ENCODE measurements at regions of chr1 and their contacts with region 1.

Region 1: DNA sequence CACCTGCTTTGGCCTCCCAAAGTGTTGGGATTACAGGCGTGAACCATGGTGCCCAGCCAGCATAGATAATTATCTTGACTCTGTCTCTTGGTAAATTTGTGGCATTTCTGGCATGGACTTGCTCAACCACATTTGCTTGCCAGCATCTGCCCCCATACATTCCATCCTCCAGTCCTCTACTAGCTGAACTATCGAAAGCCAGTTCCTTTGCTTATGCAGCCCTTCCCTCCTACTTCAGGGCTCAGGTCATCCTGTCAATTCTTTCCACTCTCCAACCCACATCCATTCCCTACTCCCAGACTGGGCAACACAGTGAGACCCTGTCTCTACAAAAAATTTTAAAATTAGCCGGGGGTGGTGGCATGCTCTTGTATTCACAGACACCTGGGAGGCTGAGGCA is 13.0 kb upstream of the UQCRHL start:
- DNase-seq: no peak
- H3K4me3 ChIP-seq: no peak overlapping the region
- H3K27ac ChIP-seq: no peak overlapping the region
- H3K4me1 ChIP-seq: peaks cover 0 to 8% (median 0%) of the 10 kb centered on the region in 4 donors
- H3K27me3 ChIP-seq: no peaks in the 10 kb centered on the region
- CTCF ChIP-seq: no peak
- EP300 ChIP-seq: no peak
- POLR2A ChIP-seq: no peak

Region 2: GRCh38 chr1:15911141-15911540 is 90.7 kb after region 1 on chr1:
- intact Hi-C with region 1: loop called (anchors 5 kb)
- DNase-seq: no peak
- H3K4me3 ChIP-seq: no peak overlapping the region
- H3K27ac ChIP-seq: no peak overlapping the region
- H3K4me1 ChIP-seq: peaks cover 0 to 6% (median 3%) of the 10 kb centered on the region in 4 donors
- H3K27me3 ChIP-seq: no peaks in the 10 kb centered on the region
- CTCF ChIP-seq: no peak
- EP300 ChIP-seq: no peak
- POLR2A ChIP-seq: no peak

Region 3: DNA sequence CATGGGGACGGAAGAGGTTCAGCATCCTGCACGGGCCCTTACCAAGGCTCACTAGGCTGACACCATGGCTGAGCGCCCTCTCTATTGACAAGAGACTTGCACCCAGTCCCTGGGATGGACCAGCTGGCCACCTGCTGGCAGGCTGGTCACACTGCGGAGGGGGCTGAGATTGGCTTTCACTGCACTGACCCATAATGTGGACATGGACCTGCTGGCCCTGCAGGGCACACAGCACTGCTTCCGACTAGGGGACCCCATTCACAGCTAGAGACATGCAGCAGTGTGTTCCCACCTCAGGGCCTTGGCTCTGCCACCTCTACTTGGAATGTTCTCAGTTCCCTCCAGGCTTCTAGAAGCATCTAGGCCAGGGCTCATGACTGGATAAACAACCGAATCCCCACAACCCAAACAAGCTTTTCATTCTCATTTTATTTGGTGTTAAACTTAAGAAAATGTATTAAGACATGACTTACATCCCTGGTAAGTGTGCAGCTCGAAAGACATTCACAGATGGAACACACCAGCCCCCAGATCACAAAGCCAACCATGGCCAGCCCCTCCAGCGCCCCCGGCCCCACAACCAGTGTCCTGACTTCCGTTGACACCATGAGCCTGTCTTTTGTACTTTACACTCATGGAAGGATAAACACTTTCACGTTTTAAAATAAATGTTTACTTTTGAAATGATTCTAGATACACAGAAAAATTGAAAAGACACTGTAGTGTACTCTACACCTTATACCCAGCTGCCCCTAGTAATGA is 174.3 kb after region 1 on chr1:
- intact Hi-C with region 1: loop called (anchors 2 kb)
- DNase-seq: peak; percentile 84
- H3K4me3 ChIP-seq: no peak overlapping the region
- H3K27ac ChIP-seq: peak overlapping the region in 1 of 4 donors; percentile 40
- H3K4me1 ChIP-seq: no peaks in the 10 kb centered on the region
- H3K27me3 ChIP-seq: no peaks in the 10 kb centered on the region
- CTCF ChIP-seq: peak; percentile 65 to 86 (median 77)
- EP300 ChIP-seq: no peak
- POLR2A ChIP-seq: no peak

Region 4: DNA sequence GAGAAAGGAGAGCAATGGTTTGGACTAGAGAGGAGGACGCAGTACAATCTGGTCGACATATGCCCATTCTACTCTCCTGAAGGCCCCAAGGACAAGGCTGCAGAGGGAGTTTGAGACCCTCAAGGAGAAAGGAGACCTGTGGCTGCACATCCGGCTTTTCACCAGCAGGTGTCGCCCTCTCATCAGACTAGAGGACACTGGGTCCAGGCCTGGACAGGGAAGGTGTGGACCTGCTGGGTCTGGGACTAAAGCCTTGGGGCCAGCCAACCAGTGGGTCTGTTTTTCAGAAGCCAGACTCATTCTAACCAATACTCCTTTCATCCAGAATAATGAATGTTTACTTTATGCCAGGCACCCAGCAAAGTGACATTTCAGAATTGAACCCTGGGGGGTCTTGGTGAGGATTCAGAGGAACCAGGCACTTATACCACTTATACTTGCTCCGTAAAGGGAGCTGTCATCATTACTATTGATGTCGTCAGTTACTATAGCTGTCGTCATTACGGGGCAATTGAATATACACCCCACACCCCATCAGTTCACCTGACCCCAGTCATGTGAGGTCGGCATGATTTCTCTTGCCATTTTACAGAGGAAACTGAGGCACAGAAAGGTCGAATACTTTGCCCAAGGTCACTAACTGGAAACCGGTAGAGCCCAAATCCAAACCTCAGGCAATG is 188.7 kb after region 1 on chr1:
- intact Hi-C with region 1: loop called (anchors 5 kb)
- DNase-seq: peak; percentile 92
- H3K4me3 ChIP-seq: no peak overlapping the region
- H3K27ac ChIP-seq: no peak overlapping the region
- H3K4me1 ChIP-seq: peaks cover 0 to 26% (median 20%) of the 10 kb centered on the region in 4 donors
- H3K27me3 ChIP-seq: no peaks in the 10 kb centered on the region
- CTCF ChIP-seq: peak; percentile 97 to 99 (median 98)
- EP300 ChIP-seq: no peak
- POLR2A ChIP-seq: no peak

Region 5: GRCh38 chr1:16243936-16244649 is 423.6 kb after region 1 on chr1:
- intact Hi-C with region 1: no loop called
- DNase-seq: peak; percentile 90
- H3K4me3 ChIP-seq: no peak overlapping the region
- H3K27ac ChIP-seq: peak overlapping the region in 3 of 4 donors; percentile 19 to 37 (median 19)
- H3K4me1 ChIP-seq: peaks cover 0 to 32% (median 23%) of the 10 kb centered on the region in 4 donors
- H3K27me3 ChIP-seq: no peaks in the 10 kb centered on the region
- CTCF ChIP-seq: peak; percentile 64 to 84 (median 82)
- EP300 ChIP-seq: no peak
- POLR2A ChIP-seq: no peak

Region 6: GRCh38 chr1:16521288-16521583 is 700.8 kb after region 1 on chr1:
- intact Hi-C with region 1: no loop called
- DNase-seq: no peak
- H3K4me3 ChIP-seq: no peak overlapping the region
- H3K27ac ChIP-seq: no peak overlapping the region
- H3K4me1 ChIP-seq: no peaks in the 10 kb centered on the region
- H3K27me3 ChIP-seq: peaks cover 11 to 28% (median 15%) of the 10 kb centered on the region in 3 donors
- CTCF ChIP-seq: no peak
- EP300 ChIP-seq: no peak
- POLR2A ChIP-seq: no peak